ENCODE measurements at regions of chr6 and their contacts with region 1.

Region 1: GRCh38 chr6:83615025-83615999 is 93.6 kb downstream of the SNAP91 start:
- DNase-seq: no peak
- ATAC-seq: no peak
- H3K4me3 ChIP-seq: no peak overlapping the region
- H3K27ac ChIP-seq: no peak overlapping the region
- H3K4me1 ChIP-seq: no peaks in the 10 kb centered on the region
- H3K27me3 ChIP-seq: no peaks in the 10 kb centered on the region
- CTCF ChIP-seq: peak; percentile 46

Region 2: GRCh38 chr6:84227434-84228197 is 612.3 kb after region 1 on chr6 and contains the start of gene CEP162:
- intact Hi-C with region 1: loop called in 1 of 2 experiments (anchors 10 kb)
- DNase-seq: peak; percentile 92 to 95
- ATAC-seq: peak; percentile 95 to 99 (median 98)
- H3K4me3 ChIP-seq: peak within 1 kb of the TSS; percentile 94
- H3K27ac ChIP-seq: peak within 1 kb of the TSS; percentile 87
- H3K4me1 ChIP-seq: peaks cover 9% of the 10 kb centered on the region
- H3K27me3 ChIP-seq: peaks cover 0 to 3% (median 0%) of the 10 kb centered on the region in 3 donors
- CTCF ChIP-seq: peak; percentile 71
- total RNA-seq, gene CEP162: 2.2 to 4.0 (median 2.4) TPM